B cell (primary cell): ENCODE measurements at regions of chr3 and their contacts with region 1.

Region 1: DNA sequence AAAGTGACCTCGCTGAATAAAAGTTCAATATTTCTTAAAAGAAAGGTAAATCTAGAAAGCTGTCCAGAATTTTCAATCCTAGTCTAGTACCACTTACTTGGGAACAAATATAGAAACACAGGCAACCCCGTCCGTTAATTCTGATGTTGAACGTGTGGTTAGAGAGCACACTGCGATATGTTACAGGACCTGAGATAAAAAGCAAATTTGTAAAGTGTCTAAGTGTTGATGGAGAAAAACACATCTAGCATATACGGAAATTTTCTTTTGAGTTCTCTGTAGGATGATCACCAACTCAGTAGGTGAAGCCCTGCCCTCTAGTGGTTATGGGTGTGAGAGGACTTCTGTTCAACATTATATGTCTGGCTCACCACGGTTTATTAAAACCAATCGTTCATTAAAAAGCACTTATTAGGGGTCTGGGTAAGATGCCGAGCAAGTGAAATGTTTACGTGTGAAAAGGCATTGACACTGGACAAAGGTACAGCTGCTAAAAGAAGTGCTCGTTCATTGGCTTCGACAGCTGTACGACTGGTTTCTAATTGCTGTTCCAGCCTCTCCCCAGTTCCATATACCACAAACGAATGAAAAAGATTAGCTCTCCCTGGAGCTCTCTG is 1.0 kb upstream of the ATP2C1 start:
- DNase-seq: peak; percentile 85
- ATAC-seq: peak; percentile 44
- H3K4me3 ChIP-seq: peak overlapping the region; percentile 71 to 98 (median 93)
- H3K4me3 Mint-ChIP-seq: peak overlapping the region; percentile 98
- H3K27ac ChIP-seq: peak overlapping the region; percentile 89 to 96
- H3K27ac Mint-ChIP-seq: peak overlapping the region; percentile 99
- H3K4me1 ChIP-seq: peaks cover 11% of the 10 kb centered on the region in 2 donors
- H3K4me1 Mint-ChIP-seq: peaks cover 32% of the 10 kb centered on the region
- H3K27me3 ChIP-seq: no peaks in the 10 kb centered on the region
- H3K27me3 Mint-ChIP-seq: no peaks in the 10 kb centered on the region
- CTCF ChIP-seq: peak; percentile 91

Region 2: DNA sequence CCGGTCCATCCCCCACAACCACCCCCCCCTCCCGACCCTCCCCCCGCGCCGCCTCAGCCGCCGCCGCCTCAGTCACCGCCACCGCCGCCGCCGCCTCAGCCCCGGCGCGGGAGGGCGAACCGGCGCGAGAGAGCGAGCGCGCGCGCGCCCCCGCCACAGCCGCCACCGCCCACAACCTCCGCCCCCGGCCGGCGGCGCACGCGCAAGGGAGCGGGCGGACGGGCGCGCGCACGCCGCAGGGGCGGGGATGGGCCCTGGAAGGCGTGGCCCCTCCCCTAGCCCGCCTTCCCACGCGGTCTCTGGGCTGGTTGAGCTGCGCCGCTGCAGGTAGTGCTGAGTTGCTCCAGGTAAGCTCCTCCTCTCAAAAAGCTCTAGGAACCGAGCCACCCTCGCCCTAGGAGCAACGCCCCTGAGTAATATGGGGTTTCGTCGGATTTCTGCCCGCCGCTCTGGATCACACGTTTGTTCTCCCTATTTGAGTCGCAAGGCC is 999.2 kb before region 1 on chr3 and contains the start of gene TMCC1:
- CTCF ChIA-PET with region 1: no interaction called
- POLR2A ChIA-PET with region 1: no interaction called
- intact Hi-C with region 1: loop called (anchors 5 kb)
- DNase-seq: peak; percentile 94
- ATAC-seq: peak; percentile 87
- H3K4me3 ChIP-seq: peak within 1 kb of the TSS; percentile 79 to 97 (median 89)
- H3K4me3 Mint-ChIP-seq: peak within 1 kb of the TSS; percentile 93
- H3K27ac ChIP-seq: peak within 1 kb of the TSS; percentile 87 to 93
- H3K27ac Mint-ChIP-seq: peak within 1 kb of the TSS; percentile 90
- H3K4me1 ChIP-seq: peaks cover 30 to 34% of the 10 kb centered on the region in 2 donors
- H3K4me1 Mint-ChIP-seq: peaks cover 39% of the 10 kb centered on the region
- H3K27me3 ChIP-seq: no peaks in the 10 kb centered on the region
- H3K27me3 Mint-ChIP-seq: no peaks in the 10 kb centered on the region
- CTCF ChIP-seq: no peak
- total RNA-seq, gene TMCC1: 32.2 and 37.8 TPM in 2 replicates

Region 3: GRCh38 chr3:130759699-130760338 is 133.0 kb before region 1 on chr3:
- CTCF ChIA-PET with region 1: interaction called, 68 read pairs
- POLR2A ChIA-PET with region 1: no interaction called
- intact Hi-C with region 1: loop called (anchors 1 kb)
- DNase-seq: peak; percentile 62
- ATAC-seq: peak; percentile 69
- H3K4me3 ChIP-seq: no peak overlapping the region
- H3K4me3 Mint-ChIP-seq: no peak overlapping the region
- H3K27ac ChIP-seq: no peak overlapping the region
- H3K27ac Mint-ChIP-seq: no peak overlapping the region
- H3K4me1 ChIP-seq: no peaks in the 10 kb centered on the region
- H3K4me1 Mint-ChIP-seq: no peaks in the 10 kb centered on the region
- H3K27me3 ChIP-seq: peaks cover 0 to 6% (median 3%) of the 10 kb centered on the region in 4 experiments
- H3K27me3 Mint-ChIP-seq: peaks cover 24% of the 10 kb centered on the region
- CTCF ChIP-seq: peak; percentile 91

Region 4: GRCh38 chr3:131026321-131027178 is 133.7 kb after region 1 on chr3 and contains the starts of genes ASTE1 and NEK11:
- CTCF ChIA-PET with region 1: interaction called, 9 read pairs
- POLR2A ChIA-PET with region 1: interaction called, 11 read pairs
- intact Hi-C with region 1: loop called (anchors 1 kb)
- DNase-seq: peak; percentile 94
- ATAC-seq: peak; percentile 97
- H3K4me3 ChIP-seq: peak within 1 kb of the TSS; percentile 90 to 95 (median 91)
- H3K4me3 Mint-ChIP-seq: peak within 1 kb of the TSS; percentile 97
- H3K27ac ChIP-seq: peak within 1 kb of the TSS; percentile 91 to 94
- H3K27ac Mint-ChIP-seq: peak within 1 kb of the TSS; percentile 98
- H3K4me1 ChIP-seq: peaks cover 31 to 32% of the 10 kb centered on the region in 2 donors
- H3K4me1 Mint-ChIP-seq: peaks cover 48% of the 10 kb centered on the region
- H3K27me3 ChIP-seq: no peaks in the 10 kb centered on the region
- H3K27me3 Mint-ChIP-seq: no peaks in the 10 kb centered on the region
- CTCF ChIP-seq: no peak
- total RNA-seq, gene ASTE1: 21.8 and 23.0 TPM in 2 replicates
- total RNA-seq, gene NEK11: 5.7 and 7.7 TPM in 2 replicates

Region 5: DNA sequence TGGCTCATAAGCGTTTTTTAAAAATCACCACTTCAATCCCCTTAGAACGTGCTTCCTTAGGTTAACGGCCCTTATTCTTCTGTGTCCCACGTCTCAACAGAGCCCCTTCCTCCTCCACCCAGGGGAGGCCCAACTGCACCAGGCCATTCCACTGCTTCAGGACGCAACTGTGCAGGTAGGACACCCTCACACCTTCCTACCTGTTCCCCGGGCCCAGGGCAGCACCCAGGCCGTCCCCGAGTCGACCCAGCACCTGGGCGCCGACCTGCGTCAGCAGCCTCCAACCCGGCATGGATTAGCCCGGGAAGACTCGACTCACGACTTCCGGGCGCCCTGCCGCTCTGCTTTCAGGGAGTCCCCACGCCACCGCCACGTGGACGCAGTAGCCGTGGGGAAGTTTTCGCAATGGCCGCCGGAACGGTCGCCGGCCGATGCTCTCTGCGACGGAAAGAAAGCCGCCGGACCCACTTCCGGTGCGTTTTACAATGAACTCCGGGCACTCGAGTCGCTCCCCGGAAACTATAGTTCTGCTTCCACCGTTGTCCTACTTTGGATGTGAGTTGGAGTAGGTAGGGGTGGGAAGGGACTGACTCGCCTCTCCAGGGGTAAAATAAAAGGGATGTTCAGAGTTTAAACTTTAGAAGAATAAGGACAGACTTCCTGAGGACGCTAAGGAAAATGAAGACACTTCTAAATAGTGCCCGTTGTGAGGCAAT is 609.8 kb after region 1 on chr3 and contains the start of gene MRPL3:
- CTCF ChIA-PET with region 1: no interaction called
- POLR2A ChIA-PET with region 1: no interaction called
- intact Hi-C with region 1: loop called (anchors 1 kb)
- DNase-seq: peak; percentile 91
- ATAC-seq: peak; percentile 90
- H3K4me3 ChIP-seq: peak within 1 kb of the TSS; percentile 72 to 97 (median 89)
- H3K4me3 Mint-ChIP-seq: peak within 1 kb of the TSS; percentile 97
- H3K27ac ChIP-seq: peak within 1 kb of the TSS; percentile 53 to 80
- H3K27ac Mint-ChIP-seq: peak within 1 kb of the TSS; percentile 93
- H3K4me1 ChIP-seq: peaks cover 21 to 25% of the 10 kb centered on the region in 2 donors
- H3K4me1 Mint-ChIP-seq: peaks cover 36% of the 10 kb centered on the region
- H3K27me3 ChIP-seq: peaks cover 0 to 2% (median 0%) of the 10 kb centered on the region in 4 experiments
- H3K27me3 Mint-ChIP-seq: no peaks in the 10 kb centered on the region
- CTCF ChIP-seq: no peak
- total RNA-seq, gene MRPL3: 40.9 and 50.1 TPM in 2 replicates